ENCODE measurements at regions of chr17 and their contacts with region 1.

Region 1: DNA sequence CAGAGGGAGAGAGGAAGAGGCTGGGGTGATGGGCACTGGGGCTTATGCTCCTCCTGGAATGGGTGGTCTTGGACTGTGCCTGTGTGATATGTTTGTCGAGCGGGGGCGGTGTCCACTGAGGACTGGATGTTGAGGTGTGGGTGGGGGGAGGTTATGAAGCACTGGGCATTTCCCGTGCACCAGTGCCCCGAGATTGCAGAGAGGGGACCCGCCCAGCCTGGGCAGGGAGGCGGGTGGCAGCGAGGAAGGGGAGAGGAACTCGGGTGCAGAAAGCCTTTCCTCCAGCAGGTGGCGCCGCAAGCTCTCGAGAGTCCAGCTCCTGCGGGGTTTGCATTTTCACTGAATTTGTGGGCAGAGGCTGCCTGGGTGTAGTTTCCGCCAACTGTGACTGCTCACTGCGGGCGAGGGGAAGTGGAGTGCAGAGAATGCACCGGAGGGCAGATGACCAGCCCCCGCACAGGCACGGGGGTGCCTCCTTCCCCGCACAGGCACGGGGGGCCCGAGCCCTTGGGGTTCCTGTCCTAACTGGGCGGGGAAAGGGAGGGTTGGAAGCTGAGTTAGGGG is 190.6 kb downstream of the SEC14L1 start:
- DNase-seq: peak; percentile 96

Region 2: DNA sequence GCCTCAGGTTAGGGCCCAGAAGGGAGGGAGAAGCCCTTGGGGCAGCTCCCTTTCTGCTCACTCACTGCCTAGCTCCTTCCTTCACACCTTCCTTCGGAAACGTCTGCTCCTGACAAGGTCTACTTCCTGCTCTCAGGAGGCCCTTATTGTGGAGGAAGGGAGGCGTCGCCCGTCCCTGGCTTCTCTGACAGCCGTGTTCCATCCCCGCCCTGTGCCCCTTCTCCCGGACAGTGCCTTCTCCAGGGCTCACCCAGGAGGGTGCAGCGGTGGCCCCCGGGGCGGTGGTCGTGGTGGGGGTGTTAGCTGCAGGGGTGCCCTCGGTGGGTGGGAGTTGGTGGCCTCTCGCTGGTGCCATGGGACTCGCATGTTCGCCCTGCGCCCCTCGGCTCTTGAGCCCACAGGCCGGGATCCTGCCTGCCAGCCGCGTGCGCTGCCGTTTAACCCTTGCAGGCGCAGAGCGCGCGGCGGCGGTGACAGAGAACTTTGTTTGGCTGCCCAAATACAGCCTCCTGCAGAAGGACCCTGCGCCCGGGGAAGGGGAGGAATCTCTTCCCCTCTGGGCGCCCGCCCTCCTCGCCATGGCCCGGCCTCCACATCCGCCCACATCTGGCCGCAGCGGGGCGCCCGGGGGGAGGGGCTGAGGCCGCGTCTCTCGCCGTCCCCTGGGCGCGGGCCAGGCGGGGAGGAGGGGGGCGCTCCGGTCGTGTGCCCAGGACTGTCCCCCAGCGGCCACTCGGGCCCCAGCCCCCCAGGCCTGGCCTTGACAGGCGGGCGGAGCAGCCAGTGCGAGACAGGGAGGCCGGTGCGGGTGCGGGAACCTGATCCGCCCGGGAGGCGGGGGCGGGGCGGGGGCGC is 41.3 kb after region 1 on chr17:
- intact Hi-C with region 1: loop called (anchors 5 kb)
- DNase-seq: peak; percentile 94

Region 3: DNA sequence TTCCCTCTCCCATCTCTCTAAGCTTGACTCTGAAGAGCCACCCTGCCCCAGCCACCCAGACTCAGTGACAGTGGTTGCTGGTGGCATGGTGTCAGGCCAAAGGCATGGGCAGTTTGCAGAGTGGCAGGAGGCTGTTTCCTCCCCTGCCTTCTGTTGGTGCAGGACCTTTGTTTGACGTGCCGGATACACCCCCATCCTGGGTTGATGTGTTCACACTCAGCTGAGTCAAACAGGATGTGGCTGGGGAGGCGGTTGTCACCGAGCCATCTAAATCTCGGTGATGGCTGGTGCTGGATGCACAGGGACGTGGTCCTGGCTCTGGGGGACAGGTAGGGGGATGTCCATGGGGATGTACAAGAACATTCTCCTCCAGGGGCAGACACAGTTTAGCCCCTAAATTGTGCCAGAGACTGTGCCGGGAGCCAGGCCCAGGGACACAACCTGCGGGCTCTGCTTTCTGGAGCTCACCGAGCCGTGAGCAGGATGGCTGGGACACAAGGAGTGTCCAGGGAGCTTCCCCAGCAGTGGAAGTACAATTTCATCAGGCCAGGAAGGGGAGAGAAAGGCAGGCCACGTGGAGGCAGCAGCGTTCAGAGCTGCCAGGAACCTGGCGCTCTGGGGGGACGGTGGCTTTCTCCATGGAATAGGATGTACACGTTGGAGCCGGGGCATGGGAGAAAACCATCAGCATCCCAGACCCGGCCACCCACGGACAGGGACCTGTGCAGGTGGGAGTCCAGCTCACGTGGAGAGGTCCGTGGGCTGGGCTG is 73.6 kb after region 1 on chr17:
- intact Hi-C with region 1: loop called (anchors 5 kb)
- DNase-seq: peak; percentile 91

Region 4: GRCh38 chr17:77494664-77495435 is 163.5 kb after region 1 on chr17:
- intact Hi-C with region 1: loop called (anchors 1 kb)
- DNase-seq: peak; percentile 90